HepG2 (cell line): ENCODE measurements at regions of chr10 and their contacts with region 1.

Region 1: GRCh38 chr10:82969405-82969804 is 1094.4 kb downstream of the NRG3 start:
- DNase-seq: no peak
- ATAC-seq: no peak
- H3K4me3 ChIP-seq: no peak overlapping the region
- H3K27ac ChIP-seq: no peak overlapping the region
- H3K4me1 ChIP-seq: no peaks in the 10 kb centered on the region
- H3K27me3 ChIP-seq: no peaks in the 10 kb centered on the region
- CTCF ChIP-seq: 0 out of 2 replicates have a peak, but pooled peaks have one; percentile 21
- EP300 ChIP-seq: no peak
- POLR2A ChIP-seq: no peak
- RAD21 ChIP-seq: no peak

Region 2: GRCh38 chr10:82796510-82796909 is 172.9 kb before region 1 on chr10:
- CTCF ChIA-PET with region 1: no interaction called
- POLR2A ChIA-PET with region 1: no interaction called
- in situ Hi-C with region 1: no loop called
- intact Hi-C with region 1: loop called (anchors 2 kb)
- DNase-seq: no peak
- ATAC-seq: no peak
- H3K4me3 ChIP-seq: no peak overlapping the region
- H3K27ac ChIP-seq: no peak overlapping the region
- H3K4me1 ChIP-seq: no peaks in the 10 kb centered on the region
- H3K27me3 ChIP-seq: no peaks in the 10 kb centered on the region
- CTCF ChIP-seq: no peak
- EP300 ChIP-seq: no peak
- POLR2A ChIP-seq: no peak
- RAD21 ChIP-seq: no peak